OCI-LY7 (cell line): ENCODE measurements at regions of chr9 and their contacts with region 1.

Region 1: GRCh38 chr9:112361601-112362000 is 18.3 kb upstream of the HSDL2 start:
- DNase-seq: peak; percentile 68
- H3K4me3 ChIP-seq: no peak overlapping the region
- H3K27ac ChIP-seq: no peak overlapping the region
- H3K4me1 ChIP-seq: no peaks in the 10 kb centered on the region
- CTCF ChIP-seq: peak; percentile 89

Region 2: GRCh38 chr9:111759762-111760639 is 601.6 kb before region 1 on chr9:
- CTCF ChIA-PET with region 1: no interaction called
- POLR2A ChIA-PET with region 1: no interaction called
- intact Hi-C with region 1: loop called (anchors 2 kb)
- DNase-seq: peak; percentile 71
- H3K4me3 ChIP-seq: no peak overlapping the region
- H3K27ac ChIP-seq: no peak overlapping the region
- H3K4me1 ChIP-seq: no peaks in the 10 kb centered on the region
- CTCF ChIP-seq: peak; percentile 85

Region 3: DNA sequence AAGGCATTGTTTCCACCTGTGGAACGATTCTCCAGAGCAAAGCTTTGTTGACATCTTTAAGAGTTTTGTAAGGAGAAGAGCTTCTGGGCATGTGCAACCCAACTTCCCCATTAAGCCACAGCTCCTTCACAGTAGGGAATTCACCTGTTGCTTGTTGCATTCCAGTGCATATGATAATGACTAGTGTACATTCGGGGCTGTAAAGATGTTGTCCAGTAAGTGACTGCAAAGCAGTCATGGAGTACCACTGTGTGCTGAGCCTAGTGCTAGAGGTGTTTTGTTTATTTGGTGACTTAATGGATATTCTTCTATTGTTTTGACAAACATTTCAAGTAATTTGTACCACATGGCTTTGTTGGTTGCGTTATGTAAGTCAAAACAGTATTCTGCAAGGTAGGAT is 452.2 kb before region 1 on chr9:
- CTCF ChIA-PET with region 1: no interaction called
- POLR2A ChIA-PET with region 1: no interaction called
- intact Hi-C with region 1: no loop called
- DNase-seq: no peak
- H3K4me3 ChIP-seq: no peak overlapping the region
- H3K27ac ChIP-seq: no peak overlapping the region
- H3K4me1 ChIP-seq: peaks cover 19% of the 10 kb centered on the region
- CTCF ChIP-seq: no peak

Region 4: DNA sequence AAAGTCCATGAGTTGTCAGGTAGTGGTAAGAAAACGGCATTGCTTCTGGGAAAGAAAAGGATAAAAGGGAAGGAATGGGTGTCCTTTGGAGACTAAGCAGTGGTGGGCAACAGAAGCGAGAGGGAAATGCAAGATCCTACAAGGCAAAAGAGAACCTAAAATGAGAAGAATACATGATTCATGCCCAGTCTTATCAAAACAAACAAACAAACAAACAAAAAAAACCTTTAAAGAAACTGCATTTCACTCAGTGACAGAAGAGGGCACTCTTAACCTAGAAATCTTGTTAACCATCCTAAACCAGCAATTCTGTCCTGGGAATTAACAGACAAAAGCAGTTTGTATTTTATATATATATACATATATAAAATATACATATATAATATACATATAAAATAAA is 275.0 kb before region 1 on chr9:
- CTCF ChIA-PET with region 1: no interaction called
- POLR2A ChIA-PET with region 1: no interaction called
- intact Hi-C with region 1: loop called (anchors 2 kb)
- DNase-seq: peak; percentile 12
- H3K4me3 ChIP-seq: no peak overlapping the region
- H3K27ac ChIP-seq: no peak overlapping the region
- H3K4me1 ChIP-seq: no peaks in the 10 kb centered on the region
- CTCF ChIP-seq: peak; percentile 77

Region 5: GRCh38 chr9:112097712-112098688 is 263.6 kb before region 1 on chr9:
- CTCF ChIA-PET with region 1: no interaction called
- POLR2A ChIA-PET with region 1: no interaction called
- intact Hi-C with region 1: loop called (anchors 2 kb)
- DNase-seq: peak; percentile 80
- H3K4me3 ChIP-seq: no peak overlapping the region
- H3K27ac ChIP-seq: no peak overlapping the region
- H3K4me1 ChIP-seq: no peaks in the 10 kb centered on the region
- CTCF ChIP-seq: peak; percentile 89

Region 6: GRCh38 chr9:112180387-112180881 is 181.2 kb before region 1 on chr9:
- CTCF ChIA-PET with region 1: no interaction called
- POLR2A ChIA-PET with region 1: no interaction called
- intact Hi-C with region 1: loop called (anchors 10 kb)
- DNase-seq: no peak
- H3K4me3 ChIP-seq: no peak overlapping the region
- H3K27ac ChIP-seq: no peak overlapping the region
- H3K4me1 ChIP-seq: no peaks in the 10 kb centered on the region
- CTCF ChIP-seq: no peak

Region 7: GRCh38 chr9:112288029-112288428 is 73.6 kb before region 1 on chr9:
- CTCF ChIA-PET with region 1: no interaction called
- POLR2A ChIA-PET with region 1: no interaction called
- intact Hi-C with region 1: no loop called
- DNase-seq: no peak
- H3K4me3 ChIP-seq: no peak overlapping the region
- H3K27ac ChIP-seq: no peak overlapping the region
- H3K4me1 ChIP-seq: no peaks in the 10 kb centered on the region
- CTCF ChIP-seq: no peak

Region 8: GRCh38 chr9:112338561-112338960 is 23.0 kb before region 1 on chr9:
- CTCF ChIA-PET with region 1: no interaction called
- POLR2A ChIA-PET with region 1: no interaction called
- intact Hi-C with region 1: no loop called
- DNase-seq: no peak
- H3K4me3 ChIP-seq: no peak overlapping the region
- H3K27ac ChIP-seq: no peak overlapping the region
- H3K4me1 ChIP-seq: peaks cover 7% of the 10 kb centered on the region
- CTCF ChIP-seq: no peak

Region 9: DNA sequence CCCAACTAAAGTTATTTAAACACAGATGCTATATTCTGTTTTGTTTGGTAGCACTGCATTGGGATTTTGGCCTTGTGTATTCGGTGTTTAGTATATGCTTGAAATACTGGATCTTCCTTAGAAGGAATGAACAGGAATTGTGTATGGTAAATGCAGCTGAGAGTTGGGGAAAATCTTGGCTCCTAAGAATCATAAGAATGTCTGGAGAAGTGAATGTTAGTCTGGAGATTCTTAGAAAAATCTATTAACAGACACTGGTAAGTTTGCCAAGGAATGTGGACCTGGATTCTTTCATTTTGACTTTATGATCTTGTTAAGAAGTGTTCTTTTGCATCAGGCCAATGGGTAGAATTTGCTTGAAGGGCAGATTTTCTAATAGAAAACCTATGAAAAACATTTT is 427.9 kb after region 1 on chr9:
- CTCF ChIA-PET with region 1: no interaction called
- POLR2A ChIA-PET with region 1: no interaction called
- intact Hi-C with region 1: no loop called
- DNase-seq: no peak
- H3K4me3 ChIP-seq: no peak overlapping the region
- H3K27ac ChIP-seq: no peak overlapping the region
- H3K4me1 ChIP-seq: peaks cover 17% of the 10 kb centered on the region
- CTCF ChIP-seq: no peak